Activated naive CD4-positive, alpha-beta T cell treated with anti-CD3 and anti-CD28 coated beads, Interleukin-2, amount 10 ng/mL, durations not matched to agents 7 days and 5 days (primary cell): ENCODE measurements at regions of chr5 and their contacts with region 1.

Region 1: GRCh38 chr5:154238776-154239481 is 48.4 kb downstream of the GALNT10 start:
- DNase-seq: no peak
- H3K4me3 Mint-ChIP-seq: no peak overlapping the region
- H3K27ac Mint-ChIP-seq: no peak overlapping the region
- H3K4me1 Mint-ChIP-seq: peaks cover 14% of the 10 kb centered on the region
- H3K27me3 Mint-ChIP-seq: no peaks in the 10 kb centered on the region

Region 2: DNA sequence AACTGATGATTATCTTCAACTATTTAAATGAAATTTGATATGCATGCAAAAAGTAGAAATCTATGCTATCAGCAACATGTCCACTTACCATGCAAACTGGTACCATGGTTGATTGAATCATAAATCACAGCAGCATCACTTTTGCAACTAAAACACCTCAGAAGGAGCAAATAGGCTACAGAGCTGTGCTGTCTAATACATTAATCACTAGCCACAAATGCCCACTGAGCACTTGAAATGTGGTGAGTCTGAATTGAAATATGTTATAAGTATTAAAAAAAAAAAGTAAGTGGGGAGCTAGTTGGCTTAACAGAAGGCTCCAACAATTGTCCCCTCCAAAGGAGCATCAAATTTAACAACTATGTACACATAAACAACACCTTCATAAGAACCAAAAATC is 312.7 kb before region 1 on chr5:
- CTCF ChIA-PET with region 1: no interaction called
- DNase-seq: no peak
- H3K4me3 Mint-ChIP-seq: no peak overlapping the region
- H3K27ac Mint-ChIP-seq: no peak overlapping the region
- H3K4me1 Mint-ChIP-seq: no peaks in the 10 kb centered on the region
- H3K27me3 Mint-ChIP-seq: no peaks in the 10 kb centered on the region

Region 3: GRCh38 chr5:154179846-154180710 is 58.9 kb before region 1 on chr5:
- CTCF ChIA-PET with region 1: interaction called, 19 read pairs
- DNase-seq: peak; percentile 52
- H3K4me3 Mint-ChIP-seq: no peak overlapping the region
- H3K27ac Mint-ChIP-seq: no peak overlapping the region
- H3K4me1 Mint-ChIP-seq: peaks cover 8% of the 10 kb centered on the region
- H3K27me3 Mint-ChIP-seq: peaks cover 36% of the 10 kb centered on the region

Region 4: GRCh38 chr5:154189819-154190594 is 48.9 kb before region 1 on chr5:
- CTCF ChIA-PET with region 1: interaction called, 54 read pairs
- DNase-seq: peak; percentile 87
- H3K4me3 Mint-ChIP-seq: peak overlapping the region; percentile 82
- H3K27ac Mint-ChIP-seq: peak overlapping the region; percentile 72
- H3K4me1 Mint-ChIP-seq: peaks cover 34% of the 10 kb centered on the region
- H3K27me3 Mint-ChIP-seq: peaks cover 13% of the 10 kb centered on the region

Region 5: DNA sequence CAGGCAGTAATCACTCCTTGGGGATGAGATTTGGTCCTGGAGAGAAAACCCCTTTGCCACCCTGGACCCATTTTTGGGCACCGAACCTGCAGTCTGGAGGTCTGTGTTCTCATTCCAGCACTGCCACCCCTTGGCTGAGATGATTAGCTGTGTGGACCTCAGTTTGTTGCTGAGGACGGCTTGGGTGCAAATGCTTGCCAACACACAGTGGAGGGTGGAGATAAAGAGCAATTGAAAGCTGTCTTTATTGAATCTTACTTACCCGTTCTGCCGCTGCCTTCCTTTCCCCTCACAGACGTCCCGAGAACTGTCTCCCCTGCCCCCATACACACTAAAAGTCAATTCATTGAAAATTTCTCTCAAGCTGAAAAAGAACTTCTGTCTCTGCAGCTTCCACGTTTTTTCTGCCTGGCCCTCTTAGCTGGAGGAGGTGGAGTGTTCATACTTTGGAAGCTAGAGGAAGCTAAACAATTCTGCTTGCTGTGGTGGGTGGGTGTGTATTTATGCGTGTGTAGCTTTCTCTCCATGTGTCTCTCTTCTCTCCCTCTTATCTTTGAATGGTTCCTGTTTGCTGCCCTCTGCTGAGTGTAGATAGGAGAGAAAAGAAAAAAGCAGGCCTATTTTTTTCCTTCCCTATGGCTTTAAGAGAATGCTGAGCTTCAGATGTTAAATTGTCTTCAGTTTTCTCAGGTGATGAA is 41.8 kb before region 1 on chr5:
- CTCF ChIA-PET with region 1: interaction called, 69 read pairs
- DNase-seq: no peak
- H3K4me3 Mint-ChIP-seq: no peak overlapping the region
- H3K27ac Mint-ChIP-seq: peak overlapping the region; percentile 87
- H3K4me1 Mint-ChIP-seq: peaks cover 63% of the 10 kb centered on the region
- H3K27me3 Mint-ChIP-seq: no peaks in the 10 kb centered on the region

Region 6: GRCh38 chr5:154214371-154215106 is 24.4 kb before region 1 on chr5:
- CTCF ChIA-PET with region 1: interaction called, 10 read pairs
- DNase-seq: no peak
- H3K4me3 Mint-ChIP-seq: no peak overlapping the region
- H3K27ac Mint-ChIP-seq: peak overlapping the region; percentile 17
- H3K4me1 Mint-ChIP-seq: peaks cover 41% of the 10 kb centered on the region
- H3K27me3 Mint-ChIP-seq: no peaks in the 10 kb centered on the region

Region 7: DNA sequence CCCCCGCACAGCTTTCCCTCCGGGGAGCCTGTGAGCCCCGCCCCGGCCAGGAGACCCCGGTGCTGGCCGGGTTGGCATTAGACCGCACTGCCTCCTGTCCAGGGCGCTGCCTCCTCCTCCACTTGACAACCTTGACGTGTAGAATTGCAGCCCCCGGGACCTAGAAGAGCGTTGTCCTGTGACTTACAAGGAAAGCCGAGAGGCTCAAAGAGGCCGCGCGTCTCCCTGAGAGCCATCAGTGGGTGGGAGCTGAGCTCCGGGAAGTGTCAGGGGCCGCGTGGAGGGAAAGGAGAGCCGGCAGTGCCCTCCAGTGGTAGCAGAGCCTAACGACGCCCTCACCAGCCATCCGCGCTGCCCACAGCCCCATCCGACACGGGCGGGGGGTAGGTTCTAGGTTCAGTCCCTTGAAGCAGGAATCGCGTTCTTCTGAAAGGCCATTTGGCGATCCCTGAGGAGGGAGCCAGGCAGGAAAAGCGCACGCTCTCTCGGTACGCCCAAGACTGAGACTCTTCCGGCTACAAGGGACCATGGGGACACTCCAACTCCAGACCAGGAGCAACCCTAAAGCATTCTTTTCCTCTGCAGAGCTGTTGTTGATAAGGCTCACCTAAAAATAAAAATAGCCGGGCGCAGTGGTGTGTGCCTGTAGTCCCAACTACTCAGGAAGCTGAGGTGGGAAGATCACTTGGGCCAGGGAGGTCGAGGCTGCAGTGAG is 166.3 kb after region 1 on chr5:
- CTCF ChIA-PET with region 1: interaction called, 10 read pairs
- DNase-seq: peak; percentile 80
- H3K4me3 Mint-ChIP-seq: peak overlapping the region; percentile 15
- H3K27ac Mint-ChIP-seq: no peak overlapping the region
- H3K4me1 Mint-ChIP-seq: peaks cover 8% of the 10 kb centered on the region
- H3K27me3 Mint-ChIP-seq: no peaks in the 10 kb centered on the region